Activated CD8-positive, alpha-beta T cell treated with anti-CD3 and anti-CD28 coated beads for 36 hours (primary cell): ENCODE measurements at regions of chr2 and their contacts with region 1.

Region 1: DNA sequence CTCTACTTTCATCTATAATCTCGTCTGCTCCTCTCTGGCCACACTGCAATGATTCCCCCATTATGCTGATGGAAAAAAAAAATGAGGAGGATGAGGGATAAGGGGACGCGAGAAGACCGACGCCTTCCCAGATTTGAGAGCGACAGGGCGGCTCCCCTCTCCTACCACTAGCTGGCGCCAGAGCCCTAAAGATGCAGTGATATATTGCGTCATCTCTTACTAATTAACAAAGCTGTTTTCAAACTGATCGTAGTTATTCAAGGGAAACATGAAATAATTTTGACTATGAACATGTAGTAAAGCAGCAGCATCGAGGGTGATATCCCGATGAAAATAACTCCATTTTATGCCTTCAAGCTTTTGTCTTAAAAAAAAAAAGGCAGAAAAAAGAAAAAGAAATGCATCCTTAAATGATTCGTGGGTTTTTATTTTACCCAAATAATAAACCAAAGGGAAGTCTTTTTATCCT is 48.0 kb upstream of the HNRNPA3 start:
- DNase-seq: peak; percentile 85
- ATAC-seq: peak; percentile 40
- H3K4me3 Mint-ChIP-seq: no peak overlapping the region
- H3K27ac Mint-ChIP-seq: no peak overlapping the region
- H3K4me1 Mint-ChIP-seq: peaks cover 22% of the 10 kb centered on the region
- H3K27me3 Mint-ChIP-seq: no peaks in the 10 kb centered on the region
- CTCF ChIP-seq: peak; percentile 100

Region 2: DNA sequence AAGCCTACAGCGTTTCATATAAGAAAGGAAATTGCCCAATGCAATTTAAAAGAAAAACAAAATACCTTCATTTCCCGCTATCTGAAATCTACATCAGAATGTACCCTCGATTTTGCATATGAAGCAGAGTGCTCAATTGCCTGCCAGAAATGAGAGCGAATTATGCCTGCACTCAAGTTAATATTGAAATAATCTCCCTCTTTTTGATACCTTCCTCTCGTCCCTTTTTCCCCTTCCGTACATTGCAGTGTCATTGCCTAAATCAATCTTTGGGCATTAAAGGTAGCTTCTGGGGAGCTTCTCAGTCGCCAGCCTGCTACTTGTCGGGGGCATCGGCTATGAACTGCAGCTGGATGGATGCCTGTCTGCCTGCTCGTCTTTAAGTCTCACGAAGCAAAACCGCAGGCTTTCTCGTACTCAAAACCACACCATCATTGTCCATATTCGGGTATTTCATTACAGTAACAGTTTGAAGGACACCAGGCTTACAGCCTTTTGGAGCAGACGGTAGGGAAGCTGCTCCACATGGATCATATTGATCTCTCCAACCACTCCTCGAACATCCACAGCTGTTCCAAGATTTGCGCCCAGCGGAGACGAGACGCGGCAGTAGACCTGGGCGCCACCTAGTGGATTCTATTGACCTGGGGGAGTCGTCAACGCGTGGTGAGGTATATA is 16.0 kb before region 1 on chr2:
- CTCF ChIA-PET with region 1: interaction called, 86 read pairs
- POLR2A ChIA-PET with region 1: no interaction called
- intact Hi-C with region 1: no loop called
- DNase-seq: peak; percentile 86
- ATAC-seq: peak; percentile 89
- H3K4me3 Mint-ChIP-seq: peak overlapping the region; percentile 81
- H3K27ac Mint-ChIP-seq: no peak overlapping the region
- H3K4me1 Mint-ChIP-seq: peaks cover 5% of the 10 kb centered on the region
- H3K27me3 Mint-ChIP-seq: peaks cover 31% of the 10 kb centered on the region
- CTCF ChIP-seq: peak; percentile 98

Region 3: GRCh38 chr2:177212106-177212890 is 47.7 kb after region 1 on chr2 and contains the start of gene HNRNPA3:
- CTCF ChIA-PET with region 1: interaction called, 17 read pairs
- POLR2A ChIA-PET with region 1: interaction called, 8 read pairs
- intact Hi-C with region 1: loop called (anchors 1 kb)
- DNase-seq: peak; percentile 99
- ATAC-seq: peak; percentile 86
- H3K4me3 Mint-ChIP-seq: peak within 1 kb of the TSS; percentile 88
- H3K27ac Mint-ChIP-seq: peak within 1 kb of the TSS; percentile 98
- H3K4me1 Mint-ChIP-seq: peaks cover 34% of the 10 kb centered on the region
- H3K27me3 Mint-ChIP-seq: no peaks in the 10 kb centered on the region
- CTCF ChIP-seq: no peak
- total RNA-seq, gene HNRNPA3: 292 to 308 TPM

Region 4: GRCh38 chr2:177254433-177255226 is 90.0 kb after region 1 on chr2:
- CTCF ChIA-PET with region 1: interaction called, 67 read pairs
- POLR2A ChIA-PET with region 1: no interaction called
- intact Hi-C with region 1: loop called (anchors 5 kb)
- DNase-seq: peak; percentile 41
- ATAC-seq: no peak
- H3K4me3 Mint-ChIP-seq: no peak overlapping the region
- H3K27ac Mint-ChIP-seq: peak overlapping the region; percentile 71
- H3K4me1 Mint-ChIP-seq: peaks cover 93% of the 10 kb centered on the region
- H3K27me3 Mint-ChIP-seq: no peaks in the 10 kb centered on the region
- CTCF ChIP-seq: peak; percentile 49

Region 5: DNA sequence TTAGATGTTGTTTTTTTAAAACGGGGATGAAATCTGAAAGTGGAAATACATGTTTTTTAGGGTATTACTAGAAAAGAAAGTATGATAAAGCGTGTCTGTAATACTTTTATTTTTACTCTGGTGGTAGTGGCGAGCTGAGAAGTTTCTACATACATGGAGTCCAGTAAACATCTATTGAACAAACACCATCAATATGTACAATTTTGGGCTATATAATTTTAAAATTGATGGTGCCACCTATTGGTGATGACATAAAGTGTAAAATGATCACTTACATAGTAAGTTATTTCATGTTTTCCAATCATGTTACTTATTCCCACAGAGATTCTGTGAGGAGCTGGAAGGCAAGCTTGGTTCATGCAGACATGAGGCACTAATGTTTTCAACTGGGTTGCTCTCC is 131.4 kb after region 1 on chr2:
- CTCF ChIA-PET with region 1: interaction called, 58 read pairs
- POLR2A ChIA-PET with region 1: no interaction called
- intact Hi-C with region 1: loop called (anchors 10 kb)
- DNase-seq: no peak
- ATAC-seq: peak; percentile 64
- H3K4me3 Mint-ChIP-seq: no peak overlapping the region
- H3K27ac Mint-ChIP-seq: no peak overlapping the region
- H3K4me1 Mint-ChIP-seq: peaks cover 15% of the 10 kb centered on the region
- H3K27me3 Mint-ChIP-seq: no peaks in the 10 kb centered on the region
- CTCF ChIP-seq: no peak

Region 6: DNA sequence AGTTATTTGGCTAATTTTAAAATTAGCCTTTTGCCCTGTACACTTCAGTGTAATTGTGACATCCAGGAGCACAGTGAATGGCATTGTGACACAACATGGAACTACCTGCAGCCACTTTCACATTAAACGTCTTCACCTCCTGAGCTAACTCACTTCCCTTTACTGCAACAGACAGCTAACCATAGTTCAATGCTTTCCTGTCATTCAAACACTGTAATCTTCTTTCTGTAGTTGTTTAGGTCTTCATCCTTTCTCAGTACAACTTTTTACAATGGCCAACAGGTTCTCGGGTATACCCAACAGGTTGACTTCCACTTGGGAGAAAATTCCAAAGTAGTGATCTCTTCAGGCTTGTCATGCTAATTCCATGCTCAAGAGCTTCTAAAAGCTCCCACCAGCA is 219.3 kb after region 1 on chr2:
- CTCF ChIA-PET with region 1: interaction called, 11 read pairs
- POLR2A ChIA-PET with region 1: no interaction called
- intact Hi-C with region 1: no loop called
- DNase-seq: no peak
- ATAC-seq: no peak
- H3K4me3 Mint-ChIP-seq: no peak overlapping the region
- H3K27ac Mint-ChIP-seq: no peak overlapping the region
- H3K4me1 Mint-ChIP-seq: no peaks in the 10 kb centered on the region
- H3K27me3 Mint-ChIP-seq: no peaks in the 10 kb centered on the region
- CTCF ChIP-seq: no peak